ENCODE measurements at regions of chr1 and their contacts with region 1.

Region 1: DNA sequence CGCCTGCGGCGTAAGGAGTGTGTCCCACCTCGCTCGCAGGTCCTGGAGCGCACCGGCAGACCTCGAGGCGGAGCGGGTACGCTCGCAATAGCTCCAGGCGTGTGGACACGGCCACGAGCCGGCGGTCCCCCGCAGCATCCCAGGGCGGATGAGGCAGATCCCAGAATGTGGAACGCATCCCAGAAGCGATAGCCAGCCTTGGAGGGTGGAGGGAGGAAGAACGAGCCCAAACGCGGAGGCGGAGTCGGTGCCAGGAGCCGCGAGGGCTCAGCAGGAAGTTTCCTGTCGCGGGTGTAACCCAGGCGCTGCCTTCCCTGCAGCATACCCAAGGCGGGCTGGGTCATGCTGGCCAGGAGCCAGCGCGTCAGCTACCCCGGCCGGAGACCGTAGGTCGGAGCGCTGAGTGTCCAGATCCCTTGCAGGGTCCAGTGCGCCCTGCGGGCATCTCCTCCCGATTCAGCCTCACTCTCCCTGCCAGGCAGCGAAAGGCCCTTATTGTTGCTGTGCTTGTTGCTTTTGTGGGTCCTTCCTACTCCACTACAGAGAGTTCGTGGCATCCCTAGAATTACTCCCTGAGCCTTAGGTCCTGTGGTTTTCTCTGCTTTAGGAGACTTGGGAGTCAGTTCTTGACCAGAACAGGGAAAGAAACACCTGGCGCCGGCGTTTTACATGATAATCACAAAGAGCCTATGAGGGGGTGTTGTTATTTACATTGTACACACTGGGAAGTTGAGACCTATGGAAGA is 27.7 kb downstream of the STYXL2 start:
- DNase-seq: peak in 8 of 9 donors; percentile 11 to 59 (median 43)
- ATAC-seq: peak; percentile 75
- H3K4me3 ChIP-seq: peak overlapping the region; percentile 79
- H3K4me3 Mint-ChIP-seq: peak overlapping the region; percentile 81 to 93 (median 88)
- H3K27ac ChIP-seq: no peak overlapping the region
- H3K27ac Mint-ChIP-seq: peak overlapping the region in 8 of 9 donors; percentile 17 to 82 (median 74)
- H3K4me1 ChIP-seq: peaks cover 0 to 8% of the 10 kb centered on the region in 2 donors
- H3K4me1 Mint-ChIP-seq: peaks cover 4 to 10% (median 7%) of the 10 kb centered on the region in 7 donors
- H3K27me3 ChIP-seq: no peaks in the 10 kb centered on the region
- H3K27me3 Mint-ChIP-seq: peaks cover 0 to 12% (median 5%) of the 10 kb centered on the region in 5 donors

Region 2: DNA sequence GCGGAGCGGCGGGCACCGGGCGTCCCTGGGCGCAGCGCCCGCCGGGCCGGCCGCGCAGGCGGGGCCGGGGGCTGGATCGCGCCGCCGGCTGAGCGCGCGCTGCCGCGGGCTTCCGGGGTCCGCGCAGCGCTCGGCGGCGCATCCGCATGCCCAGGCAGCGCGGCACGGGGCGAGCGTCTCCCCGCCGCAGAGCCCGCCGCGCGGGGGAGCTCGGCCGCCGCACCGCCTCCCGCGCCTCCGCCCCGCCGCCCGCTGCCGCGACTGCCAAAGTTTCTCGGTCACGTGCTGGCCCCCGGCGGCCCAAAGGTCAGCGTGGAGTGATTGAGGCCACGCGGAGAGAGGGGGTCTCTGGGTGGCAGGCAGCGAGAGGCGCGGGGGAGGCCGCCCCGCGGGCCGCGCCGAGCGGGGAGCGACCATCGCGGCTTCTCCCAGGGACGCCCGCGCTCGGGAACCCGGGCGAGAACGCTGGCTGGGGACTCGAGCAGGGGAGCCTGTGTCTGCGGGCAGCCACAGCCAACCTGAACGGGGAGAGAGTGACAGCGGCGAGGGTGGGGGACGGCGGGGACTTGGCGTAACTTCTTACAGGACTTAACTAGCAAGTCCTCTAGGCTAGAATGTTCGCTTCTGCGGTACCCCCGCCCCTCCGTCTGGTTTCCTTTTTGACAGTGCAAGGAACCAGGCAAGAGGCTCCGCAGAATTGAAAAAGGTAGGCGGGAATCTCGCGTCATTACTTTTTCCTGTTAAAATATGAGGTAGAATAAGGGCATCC is 146.0 kb before region 1 on chr1 and contains the start of gene ILDR2:
- CTCF ChIA-PET with region 1: interaction called, 3 read pairs
- POLR2A ChIA-PET with region 1: no interaction called
- intact Hi-C with region 1: loop called in 1 of 2 experiments (anchors 2 kb)
- DNase-seq: peak; percentile 25 to 72 (median 44)
- ATAC-seq: peak; percentile 88
- H3K4me3 ChIP-seq: peak within 1 kb of the TSS; percentile 71
- H3K4me3 Mint-ChIP-seq: peak within 1 kb of the TSS; percentile 73 to 98 (median 88)
- H3K27ac ChIP-seq: peak within 1 kb of the TSS; percentile 54
- H3K27ac Mint-ChIP-seq: peak within 1 kb of the TSS; percentile 30 to 84 (median 51)
- H3K4me1 ChIP-seq: peaks cover 4 to 9% of the 10 kb centered on the region in 2 donors
- H3K4me1 Mint-ChIP-seq: peaks cover 19 to 46% (median 24%) of the 10 kb centered on the region in 7 donors
- H3K27me3 ChIP-seq: peaks cover 0 to 5% of the 10 kb centered on the region in 2 donors
- H3K27me3 Mint-ChIP-seq: peaks cover 13 to 31% (median 24%) of the 10 kb centered on the region in 5 donors
- total RNA-seq, gene ILDR2: 0.15 to 10.0 (median 0.29) TPM

Region 3: GRCh38 chr1:167082511-167083027 is 39.0 kb before region 1 on chr1:
- CTCF ChIA-PET with region 1: interaction called, 13 read pairs
- POLR2A ChIA-PET with region 1: interaction called, 3 read pairs
- intact Hi-C with region 1: loop called in 1 of 2 experiments (anchors 5 kb)
- DNase-seq: no peak
- ATAC-seq: peak; percentile 61
- H3K4me3 ChIP-seq: no peak overlapping the region
- H3K4me3 Mint-ChIP-seq: no peak overlapping the region
- H3K27ac ChIP-seq: no peak overlapping the region
- H3K27ac Mint-ChIP-seq: peak overlapping the region in 2 of 9 donors; percentile 21 to 68
- H3K4me1 ChIP-seq: peaks cover 0 to 3% of the 10 kb centered on the region in 2 donors
- H3K4me1 Mint-ChIP-seq: peaks cover 0 to 39% (median 11%) of the 10 kb centered on the region in 7 donors
- H3K27me3 ChIP-seq: no peaks in the 10 kb centered on the region
- H3K27me3 Mint-ChIP-seq: peaks cover 0 to 12% (median 0%) of the 10 kb centered on the region in 5 donors

Region 4: GRCh38 chr1:167297222-167298214 is 176.0 kb after region 1 on chr1:
- CTCF ChIA-PET with region 1: no interaction called
- POLR2A ChIA-PET with region 1: no interaction called
- intact Hi-C with region 1: no loop called
- DNase-seq: no peak
- ATAC-seq: peak; percentile 64
- H3K4me3 ChIP-seq: no peak overlapping the region
- H3K4me3 Mint-ChIP-seq: no peak overlapping the region
- H3K27ac ChIP-seq: no peak overlapping the region
- H3K27ac Mint-ChIP-seq: peak overlapping the region in 2 of 9 donors; percentile 8 to 16
- H3K4me1 ChIP-seq: no peaks in the 10 kb centered on the region
- H3K4me1 Mint-ChIP-seq: peaks cover 2 to 48% (median 23%) of the 10 kb centered on the region in 7 donors
- H3K27me3 ChIP-seq: no peaks in the 10 kb centered on the region
- H3K27me3 Mint-ChIP-seq: no peaks in the 10 kb centered on the region

Region 5: GRCh38 chr1:167409183-167409582 is 287.6 kb after region 1 on chr1:
- CTCF ChIA-PET with region 1: no interaction called
- POLR2A ChIA-PET with region 1: no interaction called
- intact Hi-C with region 1: loop called in 1 of 2 experiments (anchors 5 kb)
- DNase-seq: peak in 2 of 9 donors; percentile 19 to 25
- ATAC-seq: peak; percentile 45
- H3K4me3 ChIP-seq: no peak overlapping the region
- H3K4me3 Mint-ChIP-seq: no peak overlapping the region
- H3K27ac ChIP-seq: no peak overlapping the region
- H3K27ac Mint-ChIP-seq: peak overlapping the region in 1 of 9 donors; percentile 39
- H3K4me1 ChIP-seq: no peaks in the 10 kb centered on the region
- H3K4me1 Mint-ChIP-seq: peaks cover 0 to 18% (median 6%) of the 10 kb centered on the region in 7 donors
- H3K27me3 ChIP-seq: no peaks in the 10 kb centered on the region
- H3K27me3 Mint-ChIP-seq: no peaks in the 10 kb centered on the region

Region 6: DNA sequence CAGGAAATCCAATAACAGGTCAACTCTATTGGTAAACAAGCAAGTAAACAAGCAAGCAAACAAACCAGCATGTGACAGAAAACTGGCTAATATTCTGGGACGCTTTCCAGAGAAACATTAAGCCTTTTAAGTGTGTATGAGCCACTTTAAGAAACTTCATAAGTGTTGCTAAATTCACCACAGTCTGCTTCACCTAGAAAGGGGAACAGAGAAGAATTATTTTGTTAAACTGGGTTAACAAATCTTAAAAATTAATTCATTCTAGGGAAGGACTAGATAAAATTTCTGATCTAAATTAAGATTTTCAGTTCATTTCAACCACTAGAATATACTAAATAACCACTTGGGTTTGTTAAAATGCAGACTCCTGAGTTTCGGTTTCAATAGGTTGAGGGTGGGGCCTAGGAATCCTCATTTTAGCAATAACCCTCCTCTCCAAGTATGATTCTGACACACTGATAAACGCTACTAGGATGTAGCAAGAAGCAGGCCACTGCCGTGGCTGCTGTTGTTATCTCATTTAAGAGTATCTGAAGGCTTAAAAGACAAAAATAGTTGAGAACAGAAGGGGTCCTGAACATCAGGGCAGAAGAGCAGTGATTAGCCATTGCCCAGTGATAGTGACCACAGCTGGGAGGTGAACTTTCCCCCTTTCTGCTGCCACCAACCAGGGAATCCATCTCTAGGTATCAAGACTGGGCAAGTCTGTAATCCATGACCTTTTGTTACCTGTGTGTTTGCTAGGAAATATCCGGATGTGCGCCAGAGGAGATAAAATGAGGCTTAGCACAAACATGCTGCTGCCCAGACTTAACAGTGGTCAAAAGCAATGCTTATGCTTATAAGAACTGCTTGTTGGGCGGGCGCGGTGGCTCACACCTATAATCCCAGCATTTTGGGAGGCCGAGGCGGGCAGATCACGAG is 420.8 kb after region 1 on chr1:
- CTCF ChIA-PET with region 1: no interaction called
- POLR2A ChIA-PET with region 1: no interaction called
- intact Hi-C with region 1: loop called in 1 of 2 experiments (anchors 5 kb)
- DNase-seq: no peak
- ATAC-seq: no peak
- H3K4me3 ChIP-seq: no peak overlapping the region
- H3K4me3 Mint-ChIP-seq: peak overlapping the region in 1 of 10 donors; percentile 15
- H3K27ac ChIP-seq: no peak overlapping the region
- H3K27ac Mint-ChIP-seq: peak overlapping the region in 2 of 9 donors; percentile 33 to 68
- H3K4me1 ChIP-seq: no peaks in the 10 kb centered on the region
- H3K4me1 Mint-ChIP-seq: peaks cover 3 to 56% (median 5%) of the 10 kb centered on the region in 7 donors
- H3K27me3 ChIP-seq: no peaks in the 10 kb centered on the region
- H3K27me3 Mint-ChIP-seq: no peaks in the 10 kb centered on the region

Measured in naive thymus-derived CD4-positive, alpha-beta T cell (primary cell).